ENCODE measurements at regions of chr6 and their contacts with region 1.

Region 1: DNA sequence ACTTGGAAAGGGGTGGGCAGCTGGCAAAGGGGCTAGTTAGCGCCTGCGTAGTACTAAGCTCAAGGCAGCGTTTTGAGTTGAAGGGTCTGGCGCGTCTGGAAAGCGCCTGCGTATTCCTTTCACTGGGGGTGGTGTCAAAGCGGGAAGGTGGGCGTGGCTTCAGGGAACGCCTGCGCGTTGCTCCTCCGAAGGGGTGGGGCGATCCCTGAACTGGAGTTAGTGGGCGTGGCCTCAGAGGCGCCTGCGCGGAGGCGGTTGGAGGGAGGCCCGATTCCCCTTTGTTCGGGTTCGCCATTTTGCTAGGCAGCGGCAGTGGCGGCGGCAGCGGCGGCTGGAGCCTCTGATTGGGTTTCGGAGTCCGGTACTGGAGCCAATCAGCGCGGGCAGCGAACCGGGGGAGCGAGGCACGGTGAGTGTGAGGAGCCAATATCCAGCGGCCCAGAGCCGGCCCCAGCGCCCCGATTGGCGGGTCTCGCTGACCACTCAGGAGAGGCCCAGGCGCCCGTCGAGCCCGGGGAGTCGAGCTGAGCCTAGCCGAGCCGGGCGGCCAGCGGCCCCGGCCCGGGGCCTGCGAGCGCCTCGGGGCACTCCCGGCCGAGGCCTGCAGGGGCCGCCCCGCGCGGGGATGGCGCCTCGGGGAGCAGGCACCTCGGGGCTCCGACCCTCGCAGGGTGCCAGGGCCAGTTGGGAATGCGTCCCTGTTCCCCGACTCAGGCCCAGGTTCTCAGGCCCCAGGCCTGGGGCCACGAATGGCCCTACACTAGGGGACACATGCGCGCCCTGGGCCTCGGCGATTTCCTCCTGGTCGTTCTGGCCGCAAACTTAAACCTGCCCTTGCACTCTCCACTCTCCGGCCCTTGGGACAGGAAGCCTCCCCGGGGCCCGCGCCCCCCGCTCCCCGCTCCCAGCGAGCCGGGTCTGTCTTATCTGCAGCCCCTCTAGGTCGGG is at the start of gene NFYA:
- DNase-seq: peak; percentile 99 to 100 (median 99)
- H3K4me3 ChIP-seq: peak within 1 kb of the TSS; percentile 88 to 99 (median 94)
- H3K27ac ChIP-seq: peak within 1 kb of the TSS; percentile 95 to 98
- H3K4me1 ChIP-seq: peaks cover 17 to 44% (median 33%) of the 10 kb centered on the region in 4 experiments
- H3K27me3 ChIP-seq: no peaks in the 10 kb centered on the region

Region 2: DNA sequence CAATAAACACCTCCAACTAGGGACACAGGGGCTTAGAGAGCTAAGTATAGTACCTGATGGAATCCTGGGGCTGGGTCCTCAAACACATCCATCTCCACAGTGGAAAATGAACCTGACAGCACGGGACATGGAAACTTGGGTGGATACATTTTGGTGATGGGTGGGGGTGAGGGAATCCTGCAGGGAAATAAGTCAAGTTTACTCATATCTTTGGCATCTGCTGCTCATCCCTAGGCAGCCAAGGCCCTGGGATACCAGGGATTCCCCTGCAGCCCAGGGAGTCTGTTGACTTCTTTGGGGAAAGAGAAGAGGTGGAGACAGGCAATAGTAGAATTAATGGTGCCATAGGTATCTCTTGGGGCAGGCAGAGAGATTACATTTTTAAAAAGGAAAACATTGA is 13.4 kb before region 1 on chr6:
- CTCF ChIA-PET with region 1: interaction called, 13 read pairs
- POLR2A ChIA-PET with region 1: no interaction called
- DNase-seq: no peak
- H3K4me3 ChIP-seq: no peak overlapping the region
- H3K27ac ChIP-seq: no peak overlapping the region
- H3K4me1 ChIP-seq: peaks cover 2 to 22% (median 5%) of the 10 kb centered on the region in 4 experiments
- H3K27me3 ChIP-seq: no peaks in the 10 kb centered on the region

Region 3: GRCh38 chr6:41092421-41093140 is 19.6 kb after region 1 on chr6:
- CTCF ChIA-PET with region 1: interaction called, 28 read pairs
- POLR2A ChIA-PET with region 1: interaction called, 4 read pairs
- DNase-seq: peak; percentile 34 to 65 (median 59)
- H3K4me3 ChIP-seq: no peak overlapping the region
- H3K27ac ChIP-seq: no peak overlapping the region
- H3K4me1 ChIP-seq: no peaks in the 10 kb centered on the region
- H3K27me3 ChIP-seq: no peaks in the 10 kb centered on the region